ENCODE measurements at regions of chr15 and their contacts with region 1.

Region 1: GRCh38 chr15:76987926-76988860 is 6.7 kb upstream of the PSTPIP1 start:
- DNase-seq: peak; percentile 90
- H3K4me3 Mint-ChIP-seq: peak overlapping the region; percentile 80
- H3K27ac Mint-ChIP-seq: peak overlapping the region; percentile 100
- H3K4me1 Mint-ChIP-seq: peaks cover 54% of the 10 kb centered on the region
- H3K27me3 Mint-ChIP-seq: no peaks in the 10 kb centered on the region

Region 2: DNA sequence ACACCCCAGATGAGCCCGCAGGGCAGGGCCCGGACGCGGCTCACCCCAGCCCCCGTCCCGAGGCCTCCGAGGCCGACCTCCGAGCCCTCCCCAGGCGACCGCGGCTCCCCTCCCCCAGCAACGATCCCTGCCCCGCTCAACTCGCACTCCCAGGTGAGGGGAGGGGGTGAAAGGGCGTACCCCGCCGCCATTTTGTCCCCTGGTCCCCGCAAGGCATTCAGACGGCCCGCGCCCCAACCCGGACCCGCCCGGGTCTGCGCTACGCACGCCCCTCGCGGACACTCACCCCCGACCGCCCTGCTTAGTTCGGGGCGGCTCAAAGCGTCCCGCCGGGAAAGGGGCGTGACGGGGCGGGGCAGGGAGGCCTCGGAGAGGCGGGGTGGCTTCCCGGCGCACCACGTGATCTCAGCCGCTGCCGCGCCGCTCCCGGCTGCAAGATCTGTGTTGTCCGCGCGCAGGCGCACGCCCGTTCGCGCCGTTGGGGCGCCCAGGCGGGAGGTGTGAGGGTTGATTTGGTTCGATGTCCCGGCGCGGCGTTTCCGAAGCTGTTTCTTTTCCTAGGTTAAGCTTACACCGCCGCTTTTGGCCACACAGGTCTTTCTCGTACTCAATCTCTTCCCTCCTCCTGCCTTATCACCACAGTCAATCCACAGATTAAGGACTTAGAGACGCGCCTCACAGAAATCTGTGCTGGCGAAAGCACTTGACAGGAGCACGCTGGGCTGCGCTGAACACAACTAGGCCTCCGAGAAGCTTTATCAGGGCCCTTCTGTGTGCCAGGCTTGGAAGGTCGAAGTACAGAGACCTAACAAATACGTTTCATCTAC is 83.0 kb before region 1 on chr15 and contains the start of gene SCAPER:
- intact Hi-C with region 1: loop called (anchors 5 kb)
- DNase-seq: peak; percentile 97
- H3K4me3 Mint-ChIP-seq: peak within 1 kb of the TSS; percentile 92
- H3K27ac Mint-ChIP-seq: peak within 1 kb of the TSS; percentile 91
- H3K4me1 Mint-ChIP-seq: peaks cover 30% of the 10 kb centered on the region
- H3K27me3 Mint-ChIP-seq: peaks cover 4% of the 10 kb centered on the region
- total RNA-seq, gene SCAPER: 24.3 and 31.0 TPM in 2 replicates

Region 3: DNA sequence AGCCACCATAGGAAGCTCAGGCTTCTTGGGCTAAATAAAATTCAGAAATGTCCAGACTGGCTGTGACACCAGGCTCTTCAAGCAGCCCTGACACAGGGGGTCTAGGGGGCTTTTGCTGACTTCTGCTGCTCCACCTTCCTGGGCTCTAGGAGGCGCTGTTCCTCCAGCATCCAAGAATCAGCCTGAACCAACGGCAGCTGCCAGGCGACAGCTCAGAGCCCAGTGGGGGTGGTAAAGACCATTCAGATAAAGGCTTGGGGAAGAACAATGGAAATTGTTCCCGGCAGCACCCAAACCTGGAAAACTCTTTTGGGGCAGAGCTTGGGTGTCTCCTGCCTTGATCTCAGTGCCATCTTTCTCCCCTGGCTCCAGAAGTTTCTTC is 14.8 kb before region 1 on chr15:
- intact Hi-C with region 1: loop called (anchors 1 kb)
- DNase-seq: peak; percentile 88
- H3K4me3 Mint-ChIP-seq: no peak overlapping the region
- H3K27ac Mint-ChIP-seq: peak overlapping the region; percentile 32
- H3K4me1 Mint-ChIP-seq: peaks cover 24% of the 10 kb centered on the region
- H3K27me3 Mint-ChIP-seq: peaks cover 8% of the 10 kb centered on the region

Region 4: DNA sequence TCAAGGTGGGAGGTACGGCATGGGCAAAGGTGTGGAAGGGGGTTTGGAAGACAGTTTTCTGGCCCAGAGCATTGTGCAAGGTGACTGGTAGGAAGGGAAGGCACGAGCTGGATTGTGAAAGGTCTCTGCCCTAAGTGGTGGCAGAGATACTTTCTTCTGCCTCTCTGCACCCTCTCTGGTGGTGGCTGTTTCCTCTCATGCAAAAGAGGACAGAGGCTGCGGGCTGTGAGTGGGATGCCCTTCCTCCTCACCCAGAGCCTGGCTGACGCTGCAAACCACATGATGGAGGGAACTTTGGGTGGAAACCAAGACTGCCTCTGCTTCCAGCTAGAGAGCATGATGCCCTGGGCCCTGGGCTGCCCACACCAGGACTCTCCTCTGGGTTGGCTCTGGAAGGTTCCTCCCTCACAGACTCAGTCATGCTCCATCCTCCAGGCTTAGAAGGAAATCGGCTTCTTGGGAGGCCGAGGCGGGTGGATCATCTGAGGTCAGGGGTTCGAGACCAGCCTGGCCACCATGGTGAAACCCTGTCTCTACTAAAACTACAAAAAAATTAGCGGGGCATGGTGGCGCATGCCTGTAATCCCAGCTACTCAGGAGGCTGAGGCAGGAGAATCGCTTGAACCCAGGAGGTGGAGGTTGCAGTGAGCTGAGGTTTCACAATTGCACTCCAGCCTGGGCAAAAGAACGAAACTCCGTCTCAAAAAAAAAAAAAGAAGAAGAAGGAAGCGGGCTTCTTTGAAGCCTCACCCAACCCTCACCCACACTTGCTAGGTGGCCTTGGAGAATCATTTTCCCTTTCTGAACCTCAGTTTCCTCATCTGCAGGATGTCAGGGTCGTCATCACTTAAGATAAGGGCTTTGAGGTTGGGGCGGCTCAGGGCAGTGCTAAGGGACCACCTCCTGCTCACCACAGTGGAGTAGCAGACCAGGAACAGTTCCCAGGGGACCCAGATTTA is 15.0 kb after region 1 on chr15:
- intact Hi-C with region 1: loop called (anchors 1 kb)
- DNase-seq: peak; percentile 92
- H3K4me3 Mint-ChIP-seq: peak overlapping the region; percentile 80
- H3K27ac Mint-ChIP-seq: peak overlapping the region; percentile 92
- H3K4me1 Mint-ChIP-seq: peaks cover 81% of the 10 kb centered on the region
- H3K27me3 Mint-ChIP-seq: no peaks in the 10 kb centered on the region

Region 5: GRCh38 chr15:77013776-77014131 is 25.6 kb after region 1 on chr15:
- intact Hi-C with region 1: loop called (anchors 2 kb)
- DNase-seq: peak; percentile 94
- H3K4me3 Mint-ChIP-seq: peak overlapping the region; percentile 88
- H3K27ac Mint-ChIP-seq: peak overlapping the region; percentile 98
- H3K4me1 Mint-ChIP-seq: peaks cover 80% of the 10 kb centered on the region
- H3K27me3 Mint-ChIP-seq: peaks cover 2% of the 10 kb centered on the region

Region 6: DNA sequence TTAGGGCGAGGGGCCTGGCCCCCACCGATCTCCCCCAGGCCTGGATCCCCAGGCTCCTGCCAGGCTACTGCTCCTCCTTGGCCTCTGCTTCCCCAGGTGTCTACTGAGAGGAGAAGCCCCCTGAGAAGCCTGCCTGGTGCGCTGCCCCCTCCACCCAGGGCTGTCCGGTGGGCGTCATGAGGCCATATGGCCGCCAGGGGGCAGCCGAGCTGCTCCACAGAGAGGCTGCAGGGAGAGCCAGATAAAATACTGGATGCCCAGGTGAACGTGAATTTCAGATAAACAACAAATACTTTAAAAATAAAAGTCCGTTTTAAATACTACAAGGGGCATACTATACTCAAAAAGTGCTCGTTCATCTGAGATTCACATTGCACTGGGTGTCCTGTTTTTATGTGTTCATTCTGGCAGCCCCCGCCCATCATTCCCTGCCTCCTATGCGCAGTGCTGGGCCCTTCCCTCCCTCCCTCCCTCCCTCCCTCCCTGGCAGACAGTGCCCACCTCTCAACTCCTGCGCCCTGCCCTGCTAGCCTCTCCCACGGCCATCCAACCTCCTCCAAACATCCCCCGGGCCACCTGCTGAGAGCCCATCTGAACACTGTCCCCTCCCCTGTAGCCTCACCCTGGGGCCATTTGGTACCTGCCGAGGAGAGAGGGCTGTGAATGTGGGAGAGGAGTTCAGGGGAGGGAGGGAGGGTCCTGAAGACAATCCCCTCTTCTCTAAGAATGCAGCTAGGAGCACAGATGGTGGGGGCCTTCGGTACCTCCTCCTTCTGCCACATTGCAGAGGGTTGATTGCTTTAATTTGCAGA is 36.3 kb after region 1 on chr15:
- intact Hi-C with region 1: loop called (anchors 1 kb)
- DNase-seq: peak; percentile 91
- H3K4me3 Mint-ChIP-seq: no peak overlapping the region
- H3K27ac Mint-ChIP-seq: peak overlapping the region; percentile 98
- H3K4me1 Mint-ChIP-seq: peaks cover 52% of the 10 kb centered on the region
- H3K27me3 Mint-ChIP-seq: no peaks in the 10 kb centered on the region

Region 7: DNA sequence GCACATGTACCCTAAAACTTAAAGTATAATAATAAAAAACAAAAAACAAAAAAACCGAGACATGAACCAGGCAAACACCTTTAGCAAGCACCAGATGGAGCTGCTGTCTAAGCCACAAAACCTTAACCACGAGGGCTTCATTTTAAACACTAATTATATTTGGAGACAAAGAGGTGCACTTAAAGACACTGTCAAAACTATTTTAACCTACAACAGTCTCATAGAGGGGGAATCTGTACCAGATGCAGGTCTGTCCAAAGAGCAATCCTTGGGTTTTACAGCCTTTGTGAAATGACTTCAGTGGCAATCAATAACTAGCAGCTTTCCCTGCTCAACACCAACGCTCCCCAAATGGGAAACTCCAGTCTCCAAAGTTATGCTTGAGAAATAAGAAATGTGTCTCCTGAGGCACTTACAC is 198.4 kb after region 1 on chr15:
- intact Hi-C with region 1: loop called (anchors 5 kb)
- DNase-seq: peak; percentile 73
- H3K4me3 Mint-ChIP-seq: no peak overlapping the region
- H3K27ac Mint-ChIP-seq: peak overlapping the region; percentile 48
- H3K4me1 Mint-ChIP-seq: peaks cover 64% of the 10 kb centered on the region
- H3K27me3 Mint-ChIP-seq: no peaks in the 10 kb centered on the region